Right ventricle myocardium superior (tissue), 1 donor: ENCODE measurements at regions of chr4 and their contacts with region 1.

Region 1: GRCh38 chr4:16443504-16444088 is 217.3 kb upstream of the TAPT1 start:
- DNase-seq: no peak
- ATAC-seq: peak; percentile 25

Region 2: GRCh38 chr4:16289897-16290554 is 153.6 kb before region 1 on chr4:
- intact Hi-C with region 1: loop called (anchors 5 kb)
- DNase-seq: no peak
- ATAC-seq: peak; percentile 58